ENCODE measurements at regions of chr14 and their contacts with region 1.

Region 1: GRCh38 chr14:20454516-20455354 is at the starts of genes APEX1 and OSGEP:
- DNase-seq: peak; percentile 99
- H3K4me3 Mint-ChIP-seq: peak within 1 kb of the TSS; percentile 52
- H3K27ac Mint-ChIP-seq: no peak within 1 kb of the TSS
- H3K4me1 Mint-ChIP-seq: peaks cover 31% of the 10 kb centered on the region
- H3K27me3 Mint-ChIP-seq: no peaks in the 10 kb centered on the region
- total RNA-seq, gene APEX1: 187 to 190 TPM
- total RNA-seq, gene OSGEP: 35.7 to 36.8 TPM

Region 2: GRCh38 chr14:20332788-20333493 is 121.8 kb before region 1 on chr14 and contains the start of gene CCNB1IP1:
- CTCF ChIA-PET with region 1: interaction called, 6 read pairs
- intact Hi-C with region 1: loop called (anchors 1 kb)
- DNase-seq: peak; percentile 71
- H3K4me3 Mint-ChIP-seq: peak within 1 kb of the TSS; percentile 90
- H3K27ac Mint-ChIP-seq: peak within 1 kb of the TSS; percentile 92
- H3K4me1 Mint-ChIP-seq: peaks cover 38% of the 10 kb centered on the region
- H3K27me3 Mint-ChIP-seq: no peaks in the 10 kb centered on the region
- total RNA-seq, gene CCNB1IP1: 93.4 to 98.6 TPM

Region 3: GRCh38 chr14:20365928-20366327 is 88.8 kb before region 1 on chr14:
- CTCF ChIA-PET with region 1: no interaction called
- intact Hi-C with region 1: loop called (anchors 1 kb)
- DNase-seq: no peak
- H3K4me3 Mint-ChIP-seq: no peak overlapping the region
- H3K27ac Mint-ChIP-seq: no peak overlapping the region
- H3K4me1 Mint-ChIP-seq: peaks cover 23% of the 10 kb centered on the region
- H3K27me3 Mint-ChIP-seq: no peaks in the 10 kb centered on the region

Region 4: GRCh38 chr14:20440882-20441281 is 13.9 kb before region 1 on chr14:
- CTCF ChIA-PET with region 1: no interaction called
- intact Hi-C with region 1: loop called (anchors 1 kb)
- DNase-seq: peak; percentile 70
- H3K4me3 Mint-ChIP-seq: peak overlapping the region; percentile 32
- H3K27ac Mint-ChIP-seq: peak overlapping the region; percentile 68
- H3K4me1 Mint-ChIP-seq: peaks cover 19% of the 10 kb centered on the region
- H3K27me3 Mint-ChIP-seq: no peaks in the 10 kb centered on the region

Region 5: GRCh38 chr14:20469242-20469889 is 14.6 kb after region 1 on chr14 and contains the start of gene PNP:
- CTCF ChIA-PET with region 1: interaction called, 4 read pairs
- intact Hi-C with region 1: loop called (anchors 1 kb)
- DNase-seq: peak; percentile 91
- H3K4me3 Mint-ChIP-seq: peak within 1 kb of the TSS; percentile 88
- H3K27ac Mint-ChIP-seq: peak within 1 kb of the TSS; percentile 97
- H3K4me1 Mint-ChIP-seq: peaks cover 36% of the 10 kb centered on the region
- H3K27me3 Mint-ChIP-seq: no peaks in the 10 kb centered on the region
- total RNA-seq, gene PNP: 187 to 191 TPM

Region 6: DNA sequence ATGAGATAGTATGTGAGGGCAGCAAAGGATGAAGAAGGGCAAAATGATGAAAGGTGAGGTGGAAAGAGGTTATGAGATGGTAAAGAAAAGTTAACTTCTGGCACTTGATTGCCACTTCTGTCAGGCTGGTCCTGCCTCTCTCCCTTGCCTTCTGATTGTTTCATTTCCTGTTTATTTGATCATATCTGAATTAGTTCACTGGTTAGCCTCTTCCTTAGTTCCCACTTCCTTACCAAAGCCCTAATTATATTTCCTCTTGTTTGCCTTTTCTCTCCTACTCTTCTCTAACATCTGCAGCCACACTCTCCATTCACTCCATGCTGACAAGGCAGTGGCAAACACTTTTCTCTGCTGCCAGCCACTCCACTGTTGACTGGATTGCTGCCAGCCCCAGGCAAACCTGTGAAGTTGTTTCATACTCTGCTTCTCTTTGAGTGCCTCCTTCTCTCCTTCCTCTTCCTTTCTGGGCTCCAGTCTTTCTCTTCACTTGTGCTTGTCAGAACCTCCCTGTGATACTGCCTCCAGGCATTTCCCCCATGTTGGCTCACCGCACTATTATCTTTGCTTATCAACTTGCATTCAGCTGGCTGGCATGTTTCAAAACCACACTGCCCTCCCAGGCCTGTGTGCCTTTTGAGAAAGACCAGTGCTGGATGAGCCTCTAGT is 22.6 kb after region 1 on chr14:
- CTCF ChIA-PET with region 1: interaction called, 3 read pairs
- intact Hi-C with region 1: loop called (anchors 1 kb)
- DNase-seq: peak; percentile 41
- H3K4me3 Mint-ChIP-seq: peak overlapping the region; percentile 19
- H3K27ac Mint-ChIP-seq: peak overlapping the region; percentile 92
- H3K4me1 Mint-ChIP-seq: peaks cover 58% of the 10 kb centered on the region
- H3K27me3 Mint-ChIP-seq: no peaks in the 10 kb centered on the region

Region 7: DNA sequence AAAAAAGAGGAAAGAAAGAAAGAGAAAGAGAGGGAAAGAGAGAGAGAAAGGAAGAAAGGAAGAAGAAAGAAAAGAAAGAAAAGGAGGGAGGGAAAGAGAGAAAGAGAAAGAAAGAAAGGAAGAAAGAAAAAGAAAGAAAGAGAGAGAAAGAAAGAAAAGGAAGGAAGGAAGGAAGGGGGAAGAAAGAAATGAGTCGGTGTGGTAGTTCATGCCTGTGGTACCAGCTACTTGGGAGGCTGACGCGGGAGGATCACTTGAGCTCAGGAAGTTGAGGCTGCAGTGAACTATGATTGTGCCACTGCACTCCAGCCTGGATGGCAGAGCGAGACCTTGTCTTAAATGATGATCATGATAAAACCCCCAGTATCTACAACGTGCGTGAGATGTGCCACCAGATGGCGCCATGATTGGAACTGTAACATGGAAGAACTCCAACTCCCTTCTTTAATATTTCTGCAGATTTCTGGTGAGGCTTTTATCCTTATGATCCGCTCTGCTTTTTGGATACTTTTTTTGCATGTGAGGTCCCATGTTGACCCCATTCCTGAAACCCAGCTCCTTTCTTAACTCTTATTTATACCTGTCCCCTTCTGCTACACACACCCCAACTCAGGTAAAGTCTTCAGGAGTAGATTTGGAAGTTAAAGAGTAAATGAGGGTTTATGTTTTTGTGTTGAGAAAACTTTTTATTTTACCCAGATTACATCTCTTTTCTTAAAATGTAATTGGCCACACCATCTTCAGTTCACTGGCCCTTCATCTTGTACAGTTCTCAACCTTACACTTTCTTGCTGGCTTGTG is 76.2 kb after region 1 on chr14:
- CTCF ChIA-PET with region 1: no interaction called
- intact Hi-C with region 1: no loop called
- DNase-seq: peak; percentile 85
- H3K4me3 Mint-ChIP-seq: peak overlapping the region; percentile 59
- H3K27ac Mint-ChIP-seq: no peak overlapping the region
- H3K4me1 Mint-ChIP-seq: peaks cover 11% of the 10 kb centered on the region
- H3K27me3 Mint-ChIP-seq: no peaks in the 10 kb centered on the region

Measured in activated naive CD4-positive, alpha-beta T cell treated with anti-CD3 and anti-CD28 coated beads for 36 hours (primary cell).